Activated B cell treated with CpG ODN at 0.5 μM for 24 hours (primary cell): ENCODE measurements at regions of chr19 and their contacts with region 1.

Region 1: GRCh38 chr19:41479757-41480191 is 36.8 kb downstream of the ERICH4 start:
- DNase-seq: no peak
- ATAC-seq: no peak
- H3K4me3 Mint-ChIP-seq: no peak overlapping the region
- H3K27ac Mint-ChIP-seq: no peak overlapping the region
- H3K4me1 Mint-ChIP-seq: peaks cover 17% of the 10 kb centered on the region
- H3K27me3 Mint-ChIP-seq: peaks cover 23% of the 10 kb centered on the region
- CTCF ChIP-seq: no peak

Region 2: DNA sequence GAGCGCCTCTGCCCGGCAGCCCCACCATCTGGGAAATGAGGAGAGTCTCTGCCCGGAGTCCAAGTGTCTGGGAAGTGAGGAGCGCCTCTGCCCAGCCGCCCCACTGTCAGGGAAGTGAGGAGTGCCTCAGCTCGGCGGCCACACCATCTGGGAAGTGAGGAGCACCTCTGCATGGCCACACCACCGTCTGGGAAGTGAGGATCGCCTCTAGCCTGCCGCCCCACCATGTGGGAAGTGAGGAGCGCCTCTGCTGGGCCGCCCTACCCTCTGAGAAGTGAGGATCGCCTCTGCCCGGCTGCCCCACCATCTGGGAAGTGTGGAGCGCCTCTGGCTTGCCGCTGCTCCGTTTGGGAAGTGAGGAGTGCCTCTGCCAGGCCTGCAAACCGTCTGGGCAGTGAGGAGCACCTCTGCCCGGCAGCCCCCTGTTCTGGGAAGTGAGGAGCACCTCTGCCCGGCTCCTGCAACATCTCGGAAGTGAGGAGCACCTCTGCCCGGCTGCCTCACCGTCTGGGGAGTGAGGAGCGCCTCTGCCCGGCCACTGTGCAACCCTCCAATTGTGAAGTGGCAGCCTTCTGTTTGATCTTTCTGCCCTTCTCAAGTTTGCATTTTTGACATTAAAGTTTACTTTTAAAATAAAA is 35.4 kb after region 1 on chr19:
- CTCF ChIA-PET with region 1: no interaction called
- POLR2A ChIA-PET with region 1: no interaction called
- intact Hi-C with region 1: loop called (anchors 5 kb)
- DNase-seq: no peak
- ATAC-seq: no peak
- H3K4me3 Mint-ChIP-seq: no peak overlapping the region
- H3K27ac Mint-ChIP-seq: no peak overlapping the region
- H3K4me1 Mint-ChIP-seq: peaks cover 22% of the 10 kb centered on the region
- H3K27me3 Mint-ChIP-seq: peaks cover 7% of the 10 kb centered on the region
- CTCF ChIP-seq: no peak